Cardiac septum (tissue), 1 donor: ENCODE measurements at regions of chr14 and their contacts with region 1.

Region 1: GRCh38 chr14:76956316-76957090 is 72.0 kb downstream of the IRF2BPL start:
- DNase-seq: peak; percentile 97

Region 2: DNA sequence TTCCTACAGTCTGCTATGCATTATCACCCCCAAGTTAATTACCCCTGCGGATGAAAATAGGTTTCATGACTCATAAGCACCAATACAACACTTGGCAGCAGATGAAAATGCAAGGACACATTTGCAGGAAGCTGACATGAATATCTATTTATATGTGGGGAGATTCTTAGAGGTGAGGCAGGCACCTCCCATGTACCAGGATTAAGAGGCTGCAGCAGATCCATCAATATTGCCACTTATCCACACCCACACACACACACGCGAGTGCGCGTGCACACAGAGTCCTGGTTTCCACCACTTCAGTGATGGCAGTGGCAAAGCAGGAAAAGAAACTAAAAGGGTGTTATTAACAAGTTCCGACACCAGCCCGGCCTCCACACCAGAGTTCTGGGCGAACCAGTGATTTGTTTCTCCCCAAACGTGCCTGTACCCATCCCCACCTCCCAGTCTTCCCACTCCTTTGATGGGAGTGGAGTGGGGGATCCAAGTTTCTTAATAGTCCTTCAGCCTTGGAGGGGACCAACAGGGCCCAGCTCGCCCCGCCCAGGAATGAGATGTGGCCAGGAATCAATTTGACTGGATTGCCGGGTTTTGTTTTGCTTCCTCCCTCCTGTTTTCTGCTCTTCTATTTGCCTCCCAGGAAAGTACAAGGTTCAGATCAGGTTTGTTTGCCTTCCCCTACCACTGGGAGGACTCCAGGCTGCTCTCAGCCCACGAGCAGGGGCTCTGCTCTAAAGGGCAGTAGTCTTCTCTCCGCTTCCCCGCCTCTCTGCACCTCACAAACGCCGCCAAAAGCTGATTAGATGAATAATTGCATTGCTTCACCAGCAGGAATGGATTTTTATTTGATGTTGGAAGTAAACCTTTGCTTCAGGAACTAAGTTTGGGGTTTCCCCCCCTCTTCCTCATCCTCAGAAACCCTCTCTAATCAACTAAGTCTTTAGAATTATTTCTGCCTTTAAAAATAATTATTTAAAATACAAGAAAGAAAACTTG is 66.8 kb after region 1 on chr14:
- intact Hi-C with region 1: loop called (anchors 2 kb)
- DNase-seq: no peak

Region 3: GRCh38 chr14:77040059-77040740 is 83.7 kb after region 1 on chr14:
- intact Hi-C with region 1: loop called (anchors 5 kb)
- DNase-seq: peak; percentile 99